ENCODE measurements at regions of chr3 and their contacts with region 1.

Region 1: GRCh38 chr3:124084022-124084881 is 92.3 kb upstream of the ROPN1 start:
- DNase-seq: peak; percentile 62
- ATAC-seq: peak; percentile 96

Region 2: GRCh38 chr3:123757281-123757940 is 326.8 kb before region 1 on chr3:
- intact Hi-C with region 1: no loop called
- DNase-seq: no peak
- ATAC-seq: peak; percentile 86

Region 3: DNA sequence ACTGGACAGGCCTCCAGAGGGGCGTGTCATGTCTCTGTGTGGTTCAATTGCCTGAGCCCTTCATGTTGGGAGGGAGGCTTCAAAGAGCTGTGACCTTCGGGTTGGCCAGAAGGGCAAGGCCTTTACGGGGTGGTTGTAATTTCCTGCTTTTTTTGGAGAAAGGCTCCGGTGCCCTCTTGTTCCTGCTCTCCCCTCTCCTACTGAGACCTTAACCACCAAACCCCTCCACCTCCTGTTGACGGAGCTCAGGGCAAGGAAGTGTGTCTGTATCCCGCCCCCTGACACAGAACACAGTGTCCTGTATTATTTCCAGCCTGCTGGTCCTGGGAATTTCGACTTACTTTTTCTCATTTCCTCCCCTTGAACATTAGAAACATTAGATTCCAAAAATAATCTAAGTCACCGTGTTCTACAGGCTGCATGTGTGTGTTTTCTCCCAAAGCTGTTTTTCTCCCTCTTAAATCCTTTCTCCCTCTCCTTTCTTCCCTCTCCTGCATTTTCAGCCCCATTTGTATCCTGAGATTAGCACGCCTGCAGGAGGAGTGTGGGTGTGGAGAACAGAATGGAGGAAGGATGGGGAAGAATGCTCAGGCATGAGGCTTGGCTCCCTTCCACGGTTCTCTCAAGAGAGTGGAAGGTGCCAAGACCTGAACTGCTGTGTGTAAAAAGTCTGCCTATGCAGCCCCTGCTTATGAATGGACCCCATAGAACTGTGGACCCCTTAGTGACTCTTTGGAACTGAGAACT is 193.1 kb after region 1 on chr3:
- intact Hi-C with region 1: loop called (anchors 10 kb)
- DNase-seq: no peak
- ATAC-seq: peak; percentile 89